Body of pancreas (tissue), 4 donors: ENCODE measurements at regions of chr2 and their contacts with region 1.

Region 1: GRCh38 chr2:209334198-209335017 is 89.4 kb upstream of the MAP2 start:
- DNase-seq: peak; percentile 67 to 73 (median 70)
- ATAC-seq: peak; percentile 92
- H3K4me3 ChIP-seq: no peak overlapping the region
- H3K27ac ChIP-seq: no peak overlapping the region
- H3K4me1 ChIP-seq: peaks cover 6% of the 10 kb centered on the region
- H3K27me3 ChIP-seq: no peaks in the 10 kb centered on the region
- CTCF ChIP-seq: peak; percentile 84 to 92 (median 88)
- POLR2A ChIP-seq: no peak

Region 2: GRCh38 chr2:208466151-208466919 is 868.1 kb before region 1 on chr2:
- intact Hi-C with region 1: loop called (anchors 5 kb)
- DNase-seq: peak; percentile 28 to 48 (median 36)
- ATAC-seq: peak; percentile 81
- H3K4me3 ChIP-seq: no peak overlapping the region
- H3K27ac ChIP-seq: no peak overlapping the region
- H3K4me1 ChIP-seq: peaks cover 31% of the 10 kb centered on the region
- H3K27me3 ChIP-seq: no peaks in the 10 kb centered on the region
- CTCF ChIP-seq: peak; percentile 22 to 70 (median 58)
- POLR2A ChIP-seq: no peak

Region 3: GRCh38 chr2:209473930-209474419 is 139.6 kb after region 1 on chr2:
- intact Hi-C with region 1: no loop called
- DNase-seq: no peak
- ATAC-seq: peak; percentile 63
- H3K4me3 ChIP-seq: no peak overlapping the region
- H3K27ac ChIP-seq: no peak overlapping the region
- H3K4me1 ChIP-seq: peaks cover 6% of the 10 kb centered on the region
- H3K27me3 ChIP-seq: no peaks in the 10 kb centered on the region
- CTCF ChIP-seq: no peak
- POLR2A ChIP-seq: no peak

Region 4: DNA sequence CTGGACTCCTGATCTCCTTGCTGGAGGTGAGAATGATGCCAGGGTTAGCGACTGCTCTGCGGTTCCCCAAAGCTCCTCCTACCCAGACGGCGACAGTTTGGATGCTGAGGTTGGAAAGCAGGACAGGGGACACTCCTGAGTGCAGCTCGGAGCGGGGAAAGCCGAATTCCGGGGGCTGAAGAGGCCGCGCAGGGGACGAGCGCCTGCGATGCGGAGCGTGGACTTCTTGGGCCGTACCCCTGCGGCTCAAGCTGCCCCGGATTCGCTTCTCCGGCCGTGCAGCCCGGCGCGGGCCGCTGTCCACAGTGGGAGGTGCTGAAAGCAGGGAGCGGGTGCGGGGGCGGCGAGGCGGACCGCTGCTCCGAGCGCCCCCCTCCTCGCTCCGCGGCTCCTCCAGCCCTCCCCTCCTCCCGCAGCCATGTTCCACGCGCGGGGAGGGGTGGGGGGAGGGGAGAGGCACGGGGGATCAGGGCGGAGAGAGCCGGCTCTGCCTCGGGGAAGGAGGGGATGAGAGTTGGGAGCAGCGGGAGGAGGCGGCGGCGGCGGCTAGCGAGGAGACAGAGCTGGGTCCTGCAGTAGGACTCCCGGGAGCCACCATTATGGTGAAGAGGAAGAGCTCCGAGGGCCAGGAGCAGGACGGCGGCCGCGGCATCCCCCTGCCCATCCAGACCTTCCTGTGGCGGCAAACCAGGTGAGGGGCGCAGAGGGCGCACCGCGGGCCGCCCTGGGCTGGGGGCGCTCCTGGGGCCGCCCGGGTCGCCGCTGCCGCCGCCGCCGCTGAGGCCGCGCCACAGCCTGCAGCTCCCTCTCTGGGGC is 437.3 kb after region 1 on chr2 and contains the start of gene UNC80:
- intact Hi-C with region 1: no loop called
- DNase-seq: peak; percentile 73 to 85 (median 76)
- ATAC-seq: peak; percentile 97
- H3K4me3 ChIP-seq: peak within 1 kb of the TSS in 1 of 2 donors; percentile 38
- H3K27ac ChIP-seq: peak within 1 kb of the TSS in 1 of 4 donors; percentile 3
- H3K4me1 ChIP-seq: peaks cover 5% of the 10 kb centered on the region
- H3K27me3 ChIP-seq: no peaks in the 10 kb centered on the region
- CTCF ChIP-seq: no peak
- POLR2A ChIP-seq: peak in 1 of 3 donors; percentile 10
- total RNA-seq, gene UNC80: 1.8 to 4.0 TPM